ENCODE measurements at regions of chr1 and their contacts with region 1.

Region 1: GRCh38 chr1:30366911-30367310 is 356.5 kb downstream of the MATN1 start:
- DNase-seq: no peak
- ATAC-seq: no peak
- H3K4me3 ChIP-seq: no peak overlapping the region
- H3K27ac ChIP-seq: no peak overlapping the region
- H3K4me1 ChIP-seq: no peaks in the 10 kb centered on the region
- H3K27me3 ChIP-seq: peaks cover 0 to 48% (median 34%) of the 10 kb centered on the region in 7 donors
- CTCF ChIP-seq: no peak

Region 2: GRCh38 chr1:30001732-30002039 is 365.2 kb before region 1 on chr1:
- intact Hi-C with region 1: loop called in 1 of 10 experiments (anchors 5 kb)
- DNase-seq: no peak
- ATAC-seq: no peak
- H3K4me3 ChIP-seq: no peak overlapping the region
- H3K27ac ChIP-seq: no peak overlapping the region
- H3K4me1 ChIP-seq: no peaks in the 10 kb centered on the region
- H3K27me3 ChIP-seq: peaks cover 0 to 17% (median 0%) of the 10 kb centered on the region in 7 donors
- CTCF ChIP-seq: no peak